H1 (cell line): ENCODE measurements at regions of chr13 and their contacts with region 1.

Region 1: DNA sequence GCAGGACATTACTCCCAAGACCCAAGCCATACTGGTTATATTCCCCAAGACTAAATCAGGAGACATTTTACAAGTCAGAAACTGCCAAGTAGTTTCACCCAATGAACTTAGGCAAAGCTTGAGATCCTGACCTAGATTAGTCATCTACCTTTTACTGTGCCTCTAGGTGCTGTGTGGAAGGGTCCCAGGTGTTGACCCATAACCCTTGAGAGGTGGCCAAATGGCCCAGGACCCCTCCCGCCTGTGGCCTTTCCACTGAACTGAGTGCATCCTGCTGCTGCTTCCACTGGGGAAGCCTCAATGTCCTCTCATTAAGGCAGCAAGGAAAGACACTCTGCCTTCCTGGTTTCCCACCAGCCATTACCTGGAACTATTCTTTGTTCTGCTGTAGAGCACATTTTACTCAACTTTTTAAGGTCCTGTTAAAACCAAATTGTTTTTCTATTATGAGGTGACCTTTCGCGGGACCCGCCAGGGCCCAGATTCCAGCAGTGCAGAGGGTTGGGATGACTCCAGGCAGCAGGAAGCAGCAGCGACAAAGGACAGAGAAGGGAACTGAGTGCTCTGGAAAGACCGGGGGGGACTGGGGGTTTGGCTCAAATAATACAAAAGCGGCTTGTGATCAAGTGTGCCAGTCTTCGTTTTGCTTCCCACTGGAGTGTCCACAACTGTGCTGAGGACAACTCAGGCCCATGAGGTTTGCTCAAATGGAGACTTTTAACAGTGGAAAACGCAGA is 27.1 kb downstream of the ANKRD10 start:
- DNase-seq: peak in 1 of 2 experiments; percentile 57
- H3K4me3 ChIP-seq: no peak overlapping the region
- H3K27ac ChIP-seq: peak overlapping the region; percentile 44; the same call in 1 of the 2 replicates
- H3K4me1 ChIP-seq: peaks cover 2 to 7% (median 4%) of the 10 kb centered on the region in 4 experiments; a peak in 5 of 7 replicates
- H3K27me3 ChIP-seq: no peaks in the 10 kb centered on the region
- CTCF ChIP-seq: no peak
- EP300 ChIP-seq: no peak
- POLR2A ChIP-seq: peak; percentile 28 to 30; a peak in 2 of 3 replicates
- RAD21 ChIP-seq: no peak; a peak in 1 of 4 replicates

Region 2: GRCh38 chr13:110874508-110874960 is 13.2 kb before region 1 on chr13:
- CTCF ChIA-PET with region 1: interaction called, 12 read pairs
- POLR2A ChIA-PET with region 1: interaction called, 16 read pairs
- DNase-seq: peak in 1 of 2 experiments; percentile 93
- H3K4me3 ChIP-seq: peak overlapping the region; percentile 35 to 57 (median 46)
- H3K27ac ChIP-seq: no peak overlapping the region
- H3K4me1 ChIP-seq: peaks cover 0 to 21% (median 11%) of the 10 kb centered on the region in 4 experiments; a peak in 5 of 7 replicates
- H3K27me3 ChIP-seq: 0 out of 7 replicates have a peak, but pooled peaks cover 0 to 5% (median under 1%) of the 10 kb centered on the region in 4 experiments
- CTCF ChIP-seq: no peak
- EP300 ChIP-seq: no peak
- POLR2A ChIP-seq: no peak
- RAD21 ChIP-seq: no peak

Region 3: GRCh38 chr13:110907951-110908898 is 20.5 kb after region 1 on chr13:
- CTCF ChIA-PET with region 1: interaction called, 12 read pairs
- POLR2A ChIA-PET with region 1: interaction called, 50 read pairs
- DNase-seq: peak in 1 of 2 experiments; percentile 75
- H3K4me3 ChIP-seq: peak overlapping the region in 1 of 4 experiments; percentile 40; a peak in 3 of 8 replicates
- H3K27ac ChIP-seq: peak overlapping the region; percentile 70
- H3K4me1 ChIP-seq: peaks cover 21 to 43% (median 32%) of the 10 kb centered on the region in 4 experiments
- H3K27me3 ChIP-seq: no peaks in the 10 kb centered on the region
- CTCF ChIP-seq: no peak
- EP300 ChIP-seq: no peak
- POLR2A ChIP-seq: peak; percentile 36 to 65
- RAD21 ChIP-seq: no peak

Region 4: GRCh38 chr13:110915057-110915873 is 27.5 kb after region 1 on chr13 and contains the start of gene ANKRD10:
- CTCF ChIA-PET with region 1: interaction called, 5 read pairs
- POLR2A ChIA-PET with region 1: interaction called, 50 read pairs
- DNase-seq: peak; percentile 99
- H3K4me3 ChIP-seq: peak within 1 kb of the TSS; percentile 86 to 100 (median 95)
- H3K27ac ChIP-seq: peak within 1 kb of the TSS; percentile 98
- H3K4me1 ChIP-seq: peaks cover 3 to 11% (median 7%) of the 10 kb centered on the region in 4 experiments; a peak in 6 of 7 replicates
- H3K27me3 ChIP-seq: no peaks in the 10 kb centered on the region
- CTCF ChIP-seq: peak; percentile 75 to 83 (median 81)
- EP300 ChIP-seq: no peak
- POLR2A ChIP-seq: peak; percentile 59 to 75
- RAD21 ChIP-seq: peak; percentile 63 to 70
- total RNA-seq, gene ANKRD10: 201 and 218 TPM in 2 replicates